ENCODE measurements at regions of chr22 and their contacts with region 1.

Region 1: DNA sequence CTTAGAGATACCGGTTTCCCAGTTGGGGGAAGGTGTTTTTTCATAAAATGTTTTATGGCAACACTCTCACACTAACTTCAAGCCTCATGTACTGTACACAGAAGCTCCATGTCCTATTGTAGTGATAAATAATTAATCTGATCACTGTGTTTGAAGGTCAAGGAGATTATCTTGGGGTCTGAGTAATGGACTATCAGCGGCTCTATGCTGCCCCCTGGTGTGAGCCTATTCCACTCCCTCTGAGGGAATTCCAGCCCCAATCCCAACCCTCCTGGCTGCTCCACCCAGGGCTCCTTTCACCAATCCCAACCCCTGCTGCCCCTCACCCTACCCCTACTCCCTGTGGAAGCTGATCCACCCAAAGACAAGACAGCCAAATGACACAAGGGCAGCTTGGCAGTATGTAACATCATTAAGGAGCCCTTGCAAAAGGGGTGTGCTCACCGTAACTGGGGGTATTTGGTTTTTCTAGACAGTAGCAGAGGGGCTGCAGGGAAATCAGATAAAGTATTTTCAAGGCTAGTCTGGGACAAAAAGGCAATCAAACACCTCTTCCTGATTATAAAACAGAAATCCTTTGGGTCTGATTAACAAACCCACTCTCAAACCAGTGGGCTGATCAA is 22.3 kb downstream of the HPS4 start:
- DNase-seq: peak; percentile 59
- CTCF ChIP-seq: peak; percentile 55

Region 2: DNA sequence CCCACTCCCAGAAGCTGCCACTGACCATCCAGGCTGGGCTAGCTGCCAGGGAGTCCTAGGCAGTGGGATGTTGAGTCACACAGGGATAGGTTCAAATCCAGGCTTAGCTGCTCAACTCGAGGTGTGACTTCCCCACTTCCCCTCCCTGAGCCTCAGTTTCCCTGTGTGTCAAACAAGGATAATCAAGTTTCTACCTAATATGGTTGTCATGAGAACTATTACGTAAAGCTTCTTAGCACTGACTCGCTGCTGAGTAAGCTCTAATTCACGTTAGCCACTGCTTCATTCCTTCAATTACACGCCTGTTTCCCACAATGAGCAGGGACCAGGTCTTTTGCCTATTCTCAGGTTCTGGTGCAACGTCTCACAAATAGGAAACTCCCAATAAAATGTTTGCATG is 224.3 kb before region 1 on chr22:
- CTCF ChIA-PET with region 1: no interaction called
- POLR2A ChIA-PET with region 1: no interaction called
- DNase-seq: no peak
- CTCF ChIP-seq: no peak

Region 3: GRCh38 chr22:26364066-26365015 is 97.0 kb before region 1 on chr22:
- CTCF ChIA-PET with region 1: interaction called, 65 read pairs
- POLR2A ChIA-PET with region 1: no interaction called
- DNase-seq: peak; percentile 55
- CTCF ChIP-seq: peak; percentile 71

Region 4: DNA sequence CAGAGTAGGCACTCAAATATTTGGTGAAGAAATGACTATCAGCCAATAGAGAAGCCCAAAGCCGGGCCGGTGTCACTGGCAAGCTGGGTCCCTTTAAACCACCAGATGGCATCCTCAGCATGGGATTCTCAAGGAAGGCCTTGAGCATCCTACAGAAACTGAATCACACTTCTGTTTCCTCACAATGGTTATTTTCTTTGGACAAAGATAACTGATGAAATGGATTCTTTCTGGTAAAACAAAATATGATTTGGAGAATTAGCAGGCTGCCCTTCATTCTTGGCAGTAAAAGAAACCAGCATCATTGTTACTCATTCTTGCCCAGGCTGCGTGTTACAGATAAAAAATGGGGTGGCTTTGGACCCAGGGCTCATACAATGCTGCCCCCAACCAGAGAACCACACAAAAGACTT is 62.6 kb before region 1 on chr22:
- CTCF ChIA-PET with region 1: interaction called, 76 read pairs
- POLR2A ChIA-PET with region 1: no interaction called
- DNase-seq: peak; percentile 66
- CTCF ChIP-seq: peak; percentile 65

Region 5: DNA sequence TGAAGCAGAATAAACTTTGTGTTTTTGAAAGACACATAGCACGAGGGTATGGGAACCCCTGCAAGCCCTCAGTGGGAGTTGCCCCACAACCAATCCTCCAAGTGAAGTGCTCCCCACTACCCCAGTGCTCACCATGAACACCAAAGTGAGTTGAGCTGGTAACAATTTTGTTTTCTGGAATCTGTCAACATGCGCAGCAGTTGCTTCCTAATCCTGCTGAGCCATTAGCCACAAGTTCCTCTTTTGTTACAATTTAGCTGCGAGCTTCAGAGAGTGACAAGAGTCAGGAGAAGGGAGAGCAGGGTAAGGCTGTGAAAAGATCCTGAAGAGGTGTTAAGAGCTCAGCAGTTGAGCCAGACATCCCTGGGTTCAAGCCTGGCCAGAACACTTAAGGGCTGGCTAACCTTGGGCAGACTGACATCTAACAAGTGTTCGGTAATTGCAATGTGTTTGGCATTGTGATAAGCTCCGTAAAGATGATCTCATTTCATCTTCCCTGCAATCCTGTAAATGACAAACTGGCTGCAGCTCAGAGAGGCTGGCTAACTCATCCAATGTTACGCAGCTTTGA is 56.4 kb before region 1 on chr22:
- CTCF ChIA-PET with region 1: interaction called, 17 read pairs
- POLR2A ChIA-PET with region 1: no interaction called
- DNase-seq: no peak
- CTCF ChIP-seq: no peak

Region 6: DNA sequence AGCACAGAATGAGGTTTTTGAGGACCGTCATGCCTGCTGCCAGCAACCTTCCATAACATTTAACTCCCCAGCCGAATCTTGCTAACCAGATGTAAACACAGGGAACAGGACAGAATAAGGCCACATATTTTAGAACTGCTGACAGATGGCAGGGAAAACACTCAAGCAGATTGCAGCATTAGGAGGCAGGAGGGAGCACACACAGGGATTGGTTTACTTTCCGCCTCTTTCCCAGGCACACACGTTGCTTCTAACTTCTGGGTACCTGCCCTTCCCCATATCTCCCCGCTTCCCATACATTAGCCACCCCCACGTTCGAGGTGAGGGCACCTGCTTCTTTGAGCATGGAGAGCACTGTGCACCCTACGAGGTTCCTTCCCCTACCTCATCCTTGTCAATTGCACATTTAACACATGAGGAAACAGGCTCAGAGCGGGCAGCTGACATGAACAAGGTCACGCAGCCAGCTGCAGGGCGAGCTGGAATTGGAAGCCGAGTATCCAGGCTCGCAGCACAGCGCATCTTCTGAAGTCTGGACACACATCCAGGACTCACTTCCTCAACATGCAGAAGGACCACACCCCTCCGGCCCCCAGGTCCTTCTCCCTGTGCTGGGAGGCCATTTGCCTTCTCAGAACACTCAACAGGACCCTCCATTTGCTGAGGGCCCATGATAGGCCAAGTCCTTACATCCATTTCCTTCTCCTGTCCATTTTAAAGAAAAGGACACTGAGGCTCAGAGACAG is 13.5 kb before region 1 on chr22:
- CTCF ChIA-PET with region 1: interaction called, 24 read pairs
- POLR2A ChIA-PET with region 1: no interaction called
- DNase-seq: no peak
- CTCF ChIP-seq: no peak

Region 7: DNA sequence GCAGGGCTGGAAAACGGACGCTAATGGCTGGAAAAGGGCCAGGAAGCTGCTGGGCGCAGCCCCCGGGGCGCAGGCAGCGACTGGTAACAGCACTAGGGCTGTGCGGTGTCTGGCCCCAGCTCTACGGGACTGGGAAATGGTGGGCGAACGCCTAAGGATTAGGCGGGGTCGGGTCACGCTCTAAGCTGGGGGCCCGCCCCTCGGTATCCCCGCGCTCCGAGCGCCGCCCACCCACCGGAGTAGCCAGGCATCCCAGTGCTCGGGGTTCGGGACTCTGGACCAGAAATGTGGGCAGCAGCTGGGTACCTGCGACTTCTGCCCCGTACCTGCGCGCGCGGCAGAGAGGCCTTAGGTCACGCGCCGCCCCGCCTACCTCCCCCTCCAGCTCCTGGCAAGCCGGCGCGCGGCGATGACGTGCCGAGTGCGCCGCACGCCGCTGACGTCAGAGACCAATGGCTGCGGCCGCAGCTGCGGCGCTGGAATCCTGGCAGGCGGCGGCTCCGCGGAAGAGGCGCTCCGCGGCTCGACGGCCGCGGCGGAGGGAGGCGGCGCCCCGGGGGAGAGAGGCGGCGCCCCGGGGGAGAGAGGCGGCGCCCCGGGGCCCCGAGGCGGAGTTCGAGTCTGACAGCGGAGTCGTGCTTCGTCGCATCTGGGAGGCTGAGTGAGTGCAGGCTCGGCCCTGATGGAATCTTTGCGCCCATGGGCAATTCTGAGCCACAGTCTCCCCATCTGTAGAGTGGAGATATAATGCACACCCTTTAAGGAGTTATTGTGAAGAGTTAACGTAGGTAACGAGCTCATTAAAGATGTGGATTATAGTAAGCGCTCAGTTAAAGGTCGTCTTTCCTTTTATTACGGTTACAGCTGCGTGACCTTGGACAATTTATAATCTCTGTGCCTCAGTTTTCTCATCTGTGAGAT is 22.4 kb after region 1 on chr22 and contains the starts of genes HPS4 and SRRD:
- CTCF ChIA-PET with region 1: interaction called, 28 read pairs
- POLR2A ChIA-PET with region 1: no interaction called
- DNase-seq: peak; percentile 94
- CTCF ChIP-seq: no peak

Measured in GM10248 (cell line).